Activated CD8-positive, alpha-beta T cell treated with anti-CD3 and anti-CD28 coated beads for 36 hours (primary cell): ENCODE measurements at regions of chr11 and their contacts with region 1.

Region 1: GRCh38 chr11:9861860-9862725 is 198.2 kb downstream of the SWAP70 start:
- DNase-seq: peak; percentile 70
- ATAC-seq: peak; percentile 68
- H3K4me3 Mint-ChIP-seq: no peak overlapping the region
- H3K27ac Mint-ChIP-seq: no peak overlapping the region
- H3K4me1 Mint-ChIP-seq: peaks cover 35% of the 10 kb centered on the region
- H3K27me3 Mint-ChIP-seq: no peaks in the 10 kb centered on the region
- CTCF ChIP-seq: peak; percentile 86

Region 2: GRCh38 chr11:9757809-9758636 is 104.1 kb before region 1 on chr11:
- CTCF ChIA-PET with region 1: interaction called, 12 read pairs
- POLR2A ChIA-PET with region 1: interaction called, 3 read pairs
- intact Hi-C with region 1: loop called (anchors 2 kb)
- DNase-seq: peak; percentile 95
- ATAC-seq: peak; percentile 64
- H3K4me3 Mint-ChIP-seq: peak overlapping the region; percentile 88
- H3K27ac Mint-ChIP-seq: peak overlapping the region; percentile 87
- H3K4me1 Mint-ChIP-seq: peaks cover 53% of the 10 kb centered on the region
- H3K27me3 Mint-ChIP-seq: no peaks in the 10 kb centered on the region
- CTCF ChIP-seq: peak; percentile 93